ENCODE measurements at regions of chr7 and their contacts with region 1.

Region 1: GRCh38 chr7:108569381-108570145 is at the starts of genes DNAJB9 and THAP5:
- DNase-seq: peak; percentile 94 to 100 (median 100)
- ATAC-seq: peak; percentile 94
- H3K4me3 ChIP-seq: peak within 1 kb of the TSS; percentile 86
- H3K4me3 Mint-ChIP-seq: peak within 1 kb of the TSS; percentile 93 to 99 (median 98)
- H3K27ac ChIP-seq: peak within 1 kb of the TSS; percentile 98
- H3K27ac Mint-ChIP-seq: peak within 1 kb of the TSS; percentile 98 to 100 (median 100)
- H3K4me1 ChIP-seq: peaks cover 21 to 34% of the 10 kb centered on the region in 2 donors
- H3K4me1 Mint-ChIP-seq: peaks cover 18 to 81% (median 68%) of the 10 kb centered on the region in 7 donors
- H3K27me3 ChIP-seq: no peaks in the 10 kb centered on the region
- H3K27me3 Mint-ChIP-seq: peaks cover 0 to 3% (median 0%) of the 10 kb centered on the region in 5 donors
- total RNA-seq, gene DNAJB9: 22.7 to 50.0 (median 29.3) TPM
- total RNA-seq, gene THAP5: 21.0 to 54.7 (median 30.8) TPM

Region 2: DNA sequence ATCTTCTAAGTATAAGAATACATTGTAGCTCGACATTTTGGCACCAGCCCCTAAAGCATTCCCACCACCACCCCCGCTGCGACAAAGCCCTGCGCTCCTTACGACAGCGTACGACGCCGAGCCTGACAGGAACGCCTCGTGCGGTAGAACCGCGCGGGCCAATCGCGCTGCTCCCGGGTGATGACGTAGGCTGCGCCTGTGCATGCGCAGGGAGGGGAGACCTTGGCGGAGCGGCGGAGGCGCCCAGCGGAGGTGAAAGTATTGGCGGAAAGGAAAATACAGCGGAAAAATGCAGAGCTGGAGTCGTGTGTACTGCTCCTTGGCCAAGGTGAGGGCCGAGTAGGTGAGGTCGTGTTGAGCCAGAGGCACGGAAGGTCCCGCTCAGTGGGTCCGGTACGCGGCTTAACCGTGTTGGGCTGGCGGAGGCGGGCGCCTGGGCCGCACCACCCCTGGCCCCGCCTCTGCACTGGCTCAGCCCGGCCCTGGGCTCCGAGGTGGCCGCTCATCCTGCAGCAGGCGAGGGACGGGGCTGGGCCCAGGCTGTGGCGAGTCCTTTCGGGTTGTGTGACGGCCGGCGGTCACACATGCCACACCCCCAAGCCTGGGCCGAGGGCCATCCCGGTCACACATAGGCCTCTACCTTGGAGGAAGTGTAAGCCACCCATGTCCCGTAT is 678.5 kb before region 1 on chr7 and contains the start of gene DLD:
- CTCF ChIA-PET with region 1: no interaction called
- POLR2A ChIA-PET with region 1: interaction called, 3 read pairs
- intact Hi-C with region 1: loop called (anchors 1 kb)
- DNase-seq: peak; percentile 89 to 94 (median 93)
- ATAC-seq: peak; percentile 98
- H3K4me3 ChIP-seq: peak within 1 kb of the TSS; percentile 93
- H3K4me3 Mint-ChIP-seq: peak within 1 kb of the TSS; percentile 89 to 100 (median 97)
- H3K27ac ChIP-seq: peak within 1 kb of the TSS; percentile 97
- H3K27ac Mint-ChIP-seq: peak within 1 kb of the TSS; percentile 94 to 100 (median 98)
- H3K4me1 ChIP-seq: peaks cover 5 to 35% of the 10 kb centered on the region in 2 donors
- H3K4me1 Mint-ChIP-seq: peaks cover 20 to 55% (median 52%) of the 10 kb centered on the region in 7 donors
- H3K27me3 ChIP-seq: no peaks in the 10 kb centered on the region
- H3K27me3 Mint-ChIP-seq: peaks cover 0 to 3% (median 0%) of the 10 kb centered on the region in 5 donors
- total RNA-seq, gene DLD: 44.5 to 69.3 (median 53.7) TPM

Region 3: DNA sequence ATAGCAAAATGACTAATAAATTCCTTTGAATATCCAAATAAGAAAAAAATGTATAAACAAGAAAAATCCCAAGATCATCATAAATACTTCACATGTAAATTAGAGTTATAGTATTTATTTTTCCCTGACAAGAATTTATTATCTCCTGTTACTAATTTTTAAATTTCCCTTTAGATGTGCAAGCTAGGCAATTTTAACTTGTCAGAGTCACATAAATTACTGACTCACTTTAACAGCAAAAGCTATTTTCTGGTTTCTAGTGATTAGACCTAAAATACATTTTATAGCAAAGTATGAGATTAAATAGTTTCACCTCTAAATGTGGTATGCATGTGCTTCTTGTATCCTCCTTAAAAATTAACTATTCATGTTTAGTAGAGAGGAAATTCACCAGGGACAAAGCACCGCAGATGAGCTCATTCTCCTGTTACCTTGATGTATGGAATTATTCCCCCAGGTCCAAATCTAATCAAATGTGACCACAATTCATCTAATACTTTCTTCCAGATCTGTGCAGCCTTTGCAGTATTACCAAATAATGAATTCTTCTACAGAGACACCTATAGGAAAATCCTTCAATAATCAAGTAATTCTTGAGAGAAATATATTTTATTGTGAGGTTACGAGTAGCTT is 621.3 kb after region 1 on chr7:
- CTCF ChIA-PET with region 1: no interaction called
- POLR2A ChIA-PET with region 1: no interaction called
- intact Hi-C with region 1: no loop called
- DNase-seq: no peak
- ATAC-seq: no peak
- H3K4me3 ChIP-seq: no peak overlapping the region
- H3K4me3 Mint-ChIP-seq: no peak overlapping the region
- H3K27ac ChIP-seq: no peak overlapping the region
- H3K27ac Mint-ChIP-seq: no peak overlapping the region
- H3K4me1 ChIP-seq: no peaks in the 10 kb centered on the region
- H3K4me1 Mint-ChIP-seq: no peaks in the 10 kb centered on the region
- H3K27me3 ChIP-seq: no peaks in the 10 kb centered on the region
- H3K27me3 Mint-ChIP-seq: no peaks in the 10 kb centered on the region

Measured in naive thymus-derived CD4-positive, alpha-beta T cell (primary cell).